ENCODE measurements at regions of chr9 and their contacts with region 1.

Region 1: DNA sequence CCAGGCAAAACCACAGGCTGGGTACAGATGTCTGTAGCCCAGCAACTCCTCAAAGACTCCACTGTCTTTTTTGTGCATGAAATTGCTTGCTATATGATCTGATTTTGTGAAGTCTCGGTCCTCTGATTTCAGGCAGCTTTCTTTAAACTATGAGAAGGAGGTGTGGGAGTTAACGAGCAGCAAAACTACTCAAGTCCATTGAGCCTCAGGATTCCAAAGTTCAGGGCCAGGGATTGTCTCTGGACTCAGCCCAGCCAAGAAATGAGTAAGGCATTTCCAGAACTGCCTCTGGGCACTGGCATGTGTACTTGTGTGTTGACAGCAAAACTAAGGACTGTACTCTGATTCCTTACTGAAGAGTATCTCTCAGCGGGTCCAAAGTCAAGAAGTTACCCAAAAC is 53.4 kb upstream of the GLIS3 start:
- DNase-seq: no peak
- ATAC-seq: no peak
- H3K4me3 ChIP-seq: no peak overlapping the region
- H3K27ac ChIP-seq: no peak overlapping the region
- H3K4me1 ChIP-seq: no peaks in the 10 kb centered on the region
- H3K27me3 ChIP-seq: peaks cover 0 to 3% of the 10 kb centered on the region in 2 experiments; a peak in 1 of 5 replicates
- CTCF ChIP-seq: no peak
- EP300 ChIP-seq: no peak
- POLR2A ChIP-seq: no peak
- RAD21 ChIP-seq: no peak

Region 2: DNA sequence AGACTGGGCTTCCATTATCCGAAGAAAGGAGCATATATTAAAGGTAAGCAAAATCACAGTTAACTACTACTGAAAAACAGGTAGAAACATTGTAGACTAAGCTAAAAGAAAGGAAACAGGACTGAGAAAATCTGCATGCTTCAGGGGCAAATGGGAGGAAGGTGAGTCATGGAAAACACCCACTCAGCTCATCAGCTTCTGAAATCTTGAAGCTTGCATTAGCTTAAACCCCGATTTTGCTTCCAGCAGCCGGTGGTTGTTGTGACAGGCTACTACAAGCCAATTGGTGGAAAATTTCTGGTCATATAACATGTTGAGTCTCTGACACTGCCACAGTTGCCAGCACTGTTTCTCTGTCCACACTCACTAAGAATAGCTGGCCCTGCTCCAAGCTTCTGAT is 1329.8 kb before region 1 on chr9:
- CTCF ChIA-PET with region 1: no interaction called
- POLR2A ChIA-PET with region 1: no interaction called
- in situ Hi-C with region 1: no loop called
- intact Hi-C with region 1: loop called (anchors 5 kb)
- DNase-seq: no peak
- ATAC-seq: no peak
- H3K4me3 ChIP-seq: no peak overlapping the region
- H3K27ac ChIP-seq: no peak overlapping the region
- H3K4me1 ChIP-seq: no peaks in the 10 kb centered on the region
- H3K27me3 ChIP-seq: no peaks in the 10 kb centered on the region
- CTCF ChIP-seq: no peak
- EP300 ChIP-seq: no peak
- POLR2A ChIP-seq: no peak
- RAD21 ChIP-seq: no peak

Region 3: GRCh38 chr9:4366591-4367330 is 13.5 kb after region 1 on chr9:
- CTCF ChIA-PET with region 1: no interaction called
- POLR2A ChIA-PET with region 1: no interaction called
- in situ Hi-C with region 1: no loop called
- intact Hi-C with region 1: no loop called
- DNase-seq: peak; percentile 10
- ATAC-seq: peak; percentile 52; the same call in 2 of the 3 replicates
- H3K4me3 ChIP-seq: no peak overlapping the region
- H3K27ac ChIP-seq: no peak overlapping the region
- H3K4me1 ChIP-seq: no peaks in the 10 kb centered on the region
- H3K27me3 ChIP-seq: no peaks in the 10 kb centered on the region
- CTCF ChIP-seq: peak; percentile 71
- EP300 ChIP-seq: 0 out of 4 replicates have a peak, but pooled peaks of 1 of the 2 experiments have one; percentile 14
- POLR2A ChIP-seq: no peak
- RAD21 ChIP-seq: peak; percentile 51; the same call in 1 of the 2 replicates